Activated T-helper 1 cell treated with anti-CD3 and anti-CD28 coated beads, Interleukin-12 subunit alpha, Interleukin-12 subunit beta, Interleukin-2, Interleukin-4 antibody, amounts not matched to agents 30 ng/mL and 10 ng/mL and 1 ng/mL, durations not matched to agents 14 hours and 24 hours and 36 hours (primary cell): ENCODE measurements at regions of chr21 and their contacts with region 1.

Region 1: DNA sequence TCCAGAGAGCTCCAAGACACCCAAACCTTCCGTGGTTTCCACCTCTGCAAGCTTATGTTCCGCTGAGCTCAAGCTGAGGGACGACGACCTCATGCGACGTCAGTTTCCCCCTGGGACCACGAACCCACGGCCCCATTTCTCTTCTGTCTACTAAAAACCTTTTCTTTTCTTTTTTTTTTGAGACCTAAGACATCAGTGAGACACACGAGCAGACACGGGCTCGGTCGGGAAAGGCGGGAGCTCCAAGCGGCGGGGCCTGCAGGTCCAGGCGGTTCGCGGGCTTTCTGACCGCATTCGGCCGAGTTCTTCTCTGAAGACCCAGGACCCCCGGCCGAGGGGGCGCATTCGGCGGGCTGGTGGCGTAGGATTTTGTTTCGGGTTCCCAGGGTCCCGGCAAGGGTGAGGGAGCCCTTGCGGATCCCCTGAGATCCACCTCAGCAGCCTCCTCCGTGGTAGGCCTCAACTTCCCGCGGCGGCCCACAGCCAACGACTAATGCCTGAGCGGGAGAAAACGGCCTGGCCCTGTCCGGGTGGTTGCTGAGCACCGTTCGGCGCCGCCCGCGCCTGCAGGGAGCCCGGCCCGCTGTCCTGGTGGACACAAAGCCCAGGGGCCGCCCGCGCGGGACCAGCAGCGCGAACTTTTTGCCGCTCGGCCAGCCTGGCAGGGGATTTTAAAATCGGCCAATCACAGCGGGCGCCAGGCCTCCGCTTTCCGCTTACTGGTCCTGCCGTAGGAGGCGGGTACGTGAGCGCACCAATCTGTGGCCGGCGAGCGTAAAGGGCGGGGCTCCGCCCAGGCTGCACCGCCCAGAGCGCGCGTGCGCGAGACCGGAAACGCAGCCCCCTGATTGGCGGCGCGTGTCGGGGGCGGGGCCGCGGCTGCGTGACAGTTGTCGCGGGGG is at the start of gene C21orf58:
- DNase-seq: peak; percentile 99
- H3K4me3 Mint-ChIP-seq: peak within 1 kb of the TSS; percentile 93
- H3K27ac Mint-ChIP-seq: peak within 1 kb of the TSS; percentile 98
- H3K4me1 Mint-ChIP-seq: peaks cover 43% of the 10 kb centered on the region
- H3K27me3 Mint-ChIP-seq: no peaks in the 10 kb centered on the region
- total RNA-seq, gene C21orf58: 26.7 and 26.9 TPM in 2 replicates

Region 2: DNA sequence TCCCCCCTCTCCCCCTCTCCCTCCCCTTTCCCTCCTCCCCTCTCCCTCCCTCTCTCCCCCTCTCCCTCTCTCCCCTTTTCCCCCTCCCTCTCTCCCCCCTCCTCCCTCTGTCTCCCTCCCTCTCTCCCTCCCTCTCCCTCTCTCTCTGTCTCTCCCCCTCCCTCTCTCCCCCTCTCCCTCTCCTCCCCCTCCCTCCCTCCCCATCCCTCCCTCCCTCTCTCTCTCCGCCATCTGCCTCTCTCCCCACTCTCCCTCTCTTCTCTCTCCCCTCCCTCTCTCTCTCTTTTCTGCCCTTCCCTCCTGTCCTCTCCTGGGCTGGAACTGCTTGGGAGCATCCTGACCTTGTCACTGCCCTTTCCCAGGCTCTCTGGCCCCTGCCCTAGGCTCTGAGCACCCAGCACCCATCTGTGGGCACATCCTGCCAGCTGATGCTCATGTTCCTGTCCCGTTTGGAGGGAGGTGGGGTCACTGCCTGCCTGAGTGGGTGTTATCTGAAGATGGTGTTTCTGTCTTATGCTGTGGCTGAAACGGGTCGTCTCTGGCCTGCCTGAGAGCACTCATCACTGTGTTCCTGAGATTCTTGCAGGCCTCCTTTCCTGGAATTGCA is 178.9 kb before region 1 on chr21:
- intact Hi-C with region 1: loop called (anchors 1 kb)
- DNase-seq: no peak
- H3K4me3 Mint-ChIP-seq: no peak overlapping the region
- H3K27ac Mint-ChIP-seq: peak overlapping the region; percentile 70
- H3K4me1 Mint-ChIP-seq: peaks cover 8% of the 10 kb centered on the region
- H3K27me3 Mint-ChIP-seq: no peaks in the 10 kb centered on the region

Region 3: DNA sequence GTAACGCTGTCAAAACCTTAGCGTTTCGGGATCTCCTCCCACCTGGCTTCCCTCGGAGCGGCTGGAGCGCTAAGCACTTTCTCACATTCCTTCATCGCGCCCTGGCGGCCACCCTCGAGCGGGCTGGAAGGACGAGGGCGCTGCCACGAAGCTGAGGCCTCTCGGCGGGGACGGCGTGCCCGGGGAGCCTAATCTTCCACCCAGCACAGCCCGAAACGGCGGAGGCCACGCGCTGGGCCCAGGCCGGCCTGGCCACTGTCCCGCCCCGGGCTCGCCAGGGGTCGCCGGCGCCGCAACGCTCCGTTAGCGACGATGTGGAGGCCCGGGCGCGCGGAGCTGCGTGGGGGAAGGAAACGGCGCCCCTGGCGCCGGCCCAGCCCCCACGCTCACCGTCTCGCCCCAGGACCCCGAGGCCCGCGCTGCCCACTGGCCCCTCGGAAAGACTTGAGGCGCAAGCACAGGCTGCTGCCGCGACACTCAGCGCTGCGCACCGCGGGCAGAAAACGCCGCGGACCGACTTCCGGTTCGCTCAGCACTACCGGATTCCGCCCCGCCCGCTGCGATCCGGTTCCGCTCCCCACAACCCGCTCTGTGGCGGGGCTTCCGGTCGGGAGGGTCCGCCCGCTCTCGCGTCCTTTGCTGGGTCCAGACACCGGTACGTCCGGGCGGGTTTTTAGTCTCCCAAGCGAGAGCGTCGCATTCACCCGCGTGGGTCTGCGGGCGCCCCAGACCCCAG is 37.5 kb before region 1 on chr21 and contains the start of gene YBEY:
- intact Hi-C with region 1: loop called (anchors 1 kb)
- DNase-seq: peak; percentile 86
- H3K4me3 Mint-ChIP-seq: peak within 1 kb of the TSS; percentile 100
- H3K27ac Mint-ChIP-seq: peak within 1 kb of the TSS; percentile 99
- H3K4me1 Mint-ChIP-seq: peaks cover 45% of the 10 kb centered on the region
- H3K27me3 Mint-ChIP-seq: no peaks in the 10 kb centered on the region
- total RNA-seq, gene YBEY: 16.7 and 17.6 TPM in 2 replicates

Region 4: DNA sequence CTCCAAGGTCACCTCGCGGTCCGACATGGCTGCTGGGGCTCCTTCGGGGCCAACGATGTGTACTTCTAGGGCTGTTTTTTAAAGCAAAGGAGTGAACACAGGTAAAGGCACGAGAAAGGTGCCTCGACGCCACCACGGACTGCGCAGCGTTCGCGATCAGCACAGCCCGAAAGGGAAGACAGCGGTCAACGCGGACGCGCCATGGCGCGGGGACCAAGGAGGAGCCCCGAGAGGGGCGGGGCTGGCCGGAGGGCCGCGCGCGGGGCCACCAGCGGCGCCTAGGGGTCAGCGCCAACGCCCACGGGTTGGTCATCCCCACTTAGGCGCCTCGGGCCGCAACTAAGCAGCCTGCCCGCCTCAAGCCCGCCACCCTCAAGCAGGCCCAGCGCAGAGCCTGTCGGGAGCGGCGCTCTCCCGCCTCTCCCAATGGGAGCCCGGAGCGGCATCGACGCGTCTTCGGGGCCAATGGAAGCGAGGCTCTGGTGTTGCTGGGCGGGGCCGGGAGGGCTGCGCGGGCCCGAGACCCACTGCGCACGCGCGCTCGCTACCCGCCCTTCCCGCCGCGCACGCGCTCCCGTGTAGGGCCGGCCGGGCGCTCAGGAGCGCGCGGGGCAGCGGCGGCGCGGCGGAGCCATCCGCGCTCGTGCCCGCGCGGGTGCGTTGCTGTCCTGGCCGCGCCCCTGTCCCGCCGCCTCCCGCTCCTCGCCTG is 135.0 kb after region 1 on chr21 and contains the start of gene DIP2A:
- intact Hi-C with region 1: loop called (anchors 1 kb)
- DNase-seq: peak; percentile 95
- H3K4me3 Mint-ChIP-seq: peak within 1 kb of the TSS; percentile 91
- H3K27ac Mint-ChIP-seq: peak within 1 kb of the TSS; percentile 91
- H3K4me1 Mint-ChIP-seq: peaks cover 43% of the 10 kb centered on the region
- H3K27me3 Mint-ChIP-seq: no peaks in the 10 kb centered on the region
- total RNA-seq, gene DIP2A: 33.5 and 33.6 TPM in 2 replicates